ENCODE measurements at regions of chr10 and their contacts with region 1.

Region 1: DNA sequence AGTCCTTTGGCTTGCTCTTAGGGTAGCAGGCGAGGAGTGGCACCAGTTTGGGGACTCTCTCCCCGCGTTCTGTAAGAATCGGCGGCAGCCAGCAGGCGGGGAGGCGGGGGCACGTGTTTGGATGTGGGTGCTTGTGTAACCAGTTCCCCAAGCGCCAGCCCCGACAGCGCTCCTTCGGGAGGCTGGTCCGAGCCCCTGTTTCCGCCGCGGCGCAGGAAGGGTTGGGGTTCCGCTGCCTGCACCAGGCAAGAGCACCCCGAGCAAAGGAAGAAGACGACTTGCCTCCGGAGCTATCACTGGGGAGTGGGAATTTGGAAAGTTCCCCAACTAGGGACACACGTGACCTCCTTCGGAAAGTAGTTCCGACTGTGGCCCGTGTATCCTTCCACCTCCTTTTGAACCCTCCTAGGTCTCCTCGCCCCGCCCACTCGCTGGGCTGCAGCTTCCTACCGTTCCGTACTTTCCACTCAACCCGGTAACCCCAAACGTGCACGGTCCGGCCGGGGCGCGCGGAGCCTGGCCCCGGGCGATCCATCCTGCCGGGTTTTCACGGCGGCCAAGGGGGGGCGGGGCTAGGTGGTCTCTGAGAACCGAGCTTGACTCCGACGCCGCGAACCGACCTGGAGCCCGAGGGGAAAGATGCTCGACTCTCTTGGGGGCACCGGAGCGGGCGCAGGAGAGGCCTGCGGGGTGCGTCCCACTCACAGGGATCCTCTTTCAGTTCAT is 1.2 kb downstream of the KLLN start:
- DNase-seq: peak; percentile 86 to 98 (median 93)
- ATAC-seq: peak; percentile 66
- H3K4me3 ChIP-seq: peak overlapping the region; percentile 87 to 95
- H3K4me3 Mint-ChIP-seq: peak overlapping the region; percentile 99
- H3K27ac ChIP-seq: peak overlapping the region; percentile 69 to 85
- H3K27ac Mint-ChIP-seq: peak overlapping the region; percentile 95
- H3K4me1 ChIP-seq: peaks cover 18% of the 10 kb centered on the region
- H3K4me1 Mint-ChIP-seq: peaks cover 38% of the 10 kb centered on the region
- H3K27me3 ChIP-seq: no peaks in the 10 kb centered on the region
- H3K27me3 Mint-ChIP-seq: no peaks in the 10 kb centered on the region
- CTCF ChIP-seq: no peak

Region 2: GRCh38 chr10:86821388-86821999 is 1040.6 kb before region 1 on chr10:
- CTCF ChIA-PET with region 1: no interaction called
- POLR2A ChIA-PET with region 1: no interaction called
- intact Hi-C with region 1: no loop called
- DNase-seq: no peak
- ATAC-seq: no peak
- H3K4me3 ChIP-seq: no peak overlapping the region
- H3K4me3 Mint-ChIP-seq: no peak overlapping the region
- H3K27ac ChIP-seq: no peak overlapping the region
- H3K27ac Mint-ChIP-seq: no peak overlapping the region
- H3K4me1 ChIP-seq: no peaks in the 10 kb centered on the region
- H3K4me1 Mint-ChIP-seq: peaks cover 2% of the 10 kb centered on the region
- H3K27me3 ChIP-seq: no peaks in the 10 kb centered on the region
- H3K27me3 Mint-ChIP-seq: no peaks in the 10 kb centered on the region
- CTCF ChIP-seq: no peak

Region 3: GRCh38 chr10:87872828-87873227 is 10.7 kb after region 1 on chr10:
- CTCF ChIA-PET with region 1: interaction called, 8 read pairs
- POLR2A ChIA-PET with region 1: interaction called, 14 read pairs
- intact Hi-C with region 1: loop called in 1 of 2 experiments (anchors 1 kb)
- DNase-seq: no peak
- ATAC-seq: no peak
- H3K4me3 ChIP-seq: no peak overlapping the region
- H3K4me3 Mint-ChIP-seq: peak overlapping the region; percentile 29
- H3K27ac ChIP-seq: no peak overlapping the region
- H3K27ac Mint-ChIP-seq: peak overlapping the region; percentile 22
- H3K4me1 ChIP-seq: peaks cover 54% of the 10 kb centered on the region
- H3K4me1 Mint-ChIP-seq: peaks cover 77% of the 10 kb centered on the region
- H3K27me3 ChIP-seq: no peaks in the 10 kb centered on the region
- H3K27me3 Mint-ChIP-seq: no peaks in the 10 kb centered on the region
- CTCF ChIP-seq: no peak

Region 4: DNA sequence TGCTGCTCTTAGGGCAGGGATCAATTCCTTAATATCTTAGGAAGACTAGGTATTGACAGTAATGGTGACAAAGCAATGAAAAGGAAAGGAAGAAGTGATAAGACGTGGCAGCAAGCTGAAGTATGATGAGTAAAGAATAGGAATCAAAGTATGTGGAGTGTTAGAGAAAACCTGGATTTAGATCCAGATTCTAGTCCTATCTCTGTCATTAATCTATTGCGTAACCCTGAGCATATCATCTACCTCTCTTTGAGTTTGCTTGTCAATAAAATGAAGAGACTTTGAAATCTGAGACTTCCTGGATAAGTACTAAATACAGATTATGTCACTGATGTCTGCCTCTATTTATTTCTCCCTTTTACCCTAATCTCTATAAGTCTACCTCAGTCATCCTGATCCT is 90.5 kb after region 1 on chr10:
- CTCF ChIA-PET with region 1: no interaction called
- POLR2A ChIA-PET with region 1: no interaction called
- intact Hi-C with region 1: loop called in 1 of 2 experiments (anchors 5 kb)
- DNase-seq: no peak
- ATAC-seq: no peak
- H3K4me3 ChIP-seq: no peak overlapping the region
- H3K4me3 Mint-ChIP-seq: no peak overlapping the region
- H3K27ac ChIP-seq: no peak overlapping the region
- H3K27ac Mint-ChIP-seq: peak overlapping the region; percentile 13
- H3K4me1 ChIP-seq: no peaks in the 10 kb centered on the region
- H3K4me1 Mint-ChIP-seq: peaks cover 28% of the 10 kb centered on the region
- H3K27me3 ChIP-seq: no peaks in the 10 kb centered on the region
- H3K27me3 Mint-ChIP-seq: no peaks in the 10 kb centered on the region
- CTCF ChIP-seq: no peak

Region 5: DNA sequence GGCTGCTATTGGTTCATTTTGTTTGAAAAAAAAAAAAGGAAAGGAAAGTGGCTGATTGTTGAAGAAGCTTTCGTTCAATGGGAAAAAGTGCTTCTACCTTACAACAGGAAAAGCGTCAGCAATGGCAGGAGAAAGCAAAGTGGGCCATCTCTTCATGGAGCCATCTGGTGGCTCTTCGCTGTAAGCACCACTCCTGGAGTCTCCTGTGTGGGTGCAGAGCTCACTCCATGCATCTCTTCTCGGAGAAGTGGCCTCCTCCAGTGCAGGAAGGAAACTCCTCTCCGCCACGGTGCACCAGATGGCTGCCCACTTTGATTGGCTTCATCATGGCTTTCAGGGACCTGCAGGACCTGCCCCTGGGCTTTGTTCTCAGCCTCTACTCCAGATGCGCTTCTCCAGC is 252.3 kb after region 1 on chr10:
- CTCF ChIA-PET with region 1: interaction called, 19 read pairs
- POLR2A ChIA-PET with region 1: interaction called, 16 read pairs
- intact Hi-C with region 1: loop called (anchors 1 to 2 kb)
- DNase-seq: peak in 3 of 9 experiments; percentile 17 to 64 (median 52)
- ATAC-seq: peak; percentile 47
- H3K4me3 ChIP-seq: no peak overlapping the region
- H3K4me3 Mint-ChIP-seq: no peak overlapping the region
- H3K27ac ChIP-seq: no peak overlapping the region
- H3K27ac Mint-ChIP-seq: no peak overlapping the region
- H3K4me1 ChIP-seq: peaks cover 23% of the 10 kb centered on the region
- H3K4me1 Mint-ChIP-seq: peaks cover 16% of the 10 kb centered on the region
- H3K27me3 ChIP-seq: no peaks in the 10 kb centered on the region
- H3K27me3 Mint-ChIP-seq: no peaks in the 10 kb centered on the region
- CTCF ChIP-seq: no peak

Region 6: GRCh38 chr10:88386821-88387773 is 525.0 kb after region 1 on chr10:
- CTCF ChIA-PET with region 1: interaction called, 66 read pairs
- POLR2A ChIA-PET with region 1: interaction called, 57 read pairs
- intact Hi-C with region 1: loop called (anchors 1 kb)
- DNase-seq: peak in 2 of 9 experiments; percentile 28 to 59
- ATAC-seq: peak; percentile 57
- H3K4me3 ChIP-seq: no peak overlapping the region
- H3K4me3 Mint-ChIP-seq: no peak overlapping the region
- H3K27ac ChIP-seq: peak overlapping the region; percentile 80 to 86
- H3K27ac Mint-ChIP-seq: no peak overlapping the region
- H3K4me1 ChIP-seq: peaks cover 73% of the 10 kb centered on the region
- H3K4me1 Mint-ChIP-seq: peaks cover 34% of the 10 kb centered on the region
- H3K27me3 ChIP-seq: no peaks in the 10 kb centered on the region
- H3K27me3 Mint-ChIP-seq: no peaks in the 10 kb centered on the region
- CTCF ChIP-seq: no peak

Region 7: GRCh38 chr10:88582806-88583583 is 720.9 kb after region 1 on chr10 and contains the start of gene RNLS:
- CTCF ChIA-PET with region 1: no interaction called
- POLR2A ChIA-PET with region 1: interaction called, 18 read pairs
- intact Hi-C with region 1: no loop called
- DNase-seq: peak; percentile 21 to 84 (median 65)
- ATAC-seq: peak; percentile 83
- H3K4me3 ChIP-seq: peak within 1 kb of the TSS; percentile 83
- H3K4me3 Mint-ChIP-seq: peak within 1 kb of the TSS; percentile 91
- H3K27ac ChIP-seq: peak within 1 kb of the TSS; percentile 72 to 83
- H3K27ac Mint-ChIP-seq: peak within 1 kb of the TSS; percentile 92
- H3K4me1 ChIP-seq: peaks cover 7% of the 10 kb centered on the region
- H3K4me1 Mint-ChIP-seq: peaks cover 11% of the 10 kb centered on the region
- H3K27me3 ChIP-seq: no peaks in the 10 kb centered on the region
- H3K27me3 Mint-ChIP-seq: peaks cover 3% of the 10 kb centered on the region
- CTCF ChIP-seq: peak; percentile 61
- total RNA-seq, gene RNLS: 1.6 to 1.7 TPM

Region 8: DNA sequence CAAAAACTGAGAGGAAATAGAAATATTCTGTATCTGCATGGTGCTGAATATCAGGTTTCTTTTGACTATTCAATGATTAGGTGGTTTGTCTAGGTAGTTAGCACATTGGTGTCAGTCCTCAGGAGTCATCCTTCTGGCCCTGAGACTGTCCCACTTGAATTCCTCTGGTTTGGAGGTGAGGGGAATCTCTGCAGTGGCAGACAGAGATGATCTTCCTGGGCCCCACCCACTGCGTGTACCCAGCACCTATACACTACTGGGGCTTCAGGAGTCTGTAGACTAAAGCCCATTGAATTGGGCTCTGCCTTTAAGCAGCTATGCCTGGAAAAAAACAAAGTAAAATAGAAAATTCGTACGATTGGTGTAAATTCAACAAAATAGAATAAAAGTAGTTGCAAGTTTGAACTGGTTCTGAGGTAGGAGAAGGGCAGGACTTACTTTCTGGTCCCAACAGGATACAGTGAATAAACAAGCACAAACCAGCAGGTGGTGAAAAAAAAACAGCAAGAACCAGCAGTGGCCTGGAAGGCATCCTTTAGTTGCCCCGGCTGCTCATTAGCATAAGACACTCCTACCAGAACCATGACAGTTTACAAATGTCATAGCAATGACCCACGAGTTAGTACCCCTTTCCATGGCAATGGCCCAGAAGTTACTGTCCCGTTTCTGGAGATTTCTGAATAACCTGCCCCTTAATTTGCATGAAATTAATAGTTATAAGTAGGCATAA is 942.1 kb after region 1 on chr10:
- CTCF ChIA-PET with region 1: no interaction called
- POLR2A ChIA-PET with region 1: no interaction called
- intact Hi-C with region 1: no loop called
- DNase-seq: no peak
- ATAC-seq: no peak
- H3K4me3 ChIP-seq: no peak overlapping the region
- H3K4me3 Mint-ChIP-seq: no peak overlapping the region
- H3K27ac ChIP-seq: no peak overlapping the region
- H3K27ac Mint-ChIP-seq: no peak overlapping the region
- H3K4me1 ChIP-seq: no peaks in the 10 kb centered on the region
- H3K4me1 Mint-ChIP-seq: no peaks in the 10 kb centered on the region
- H3K27me3 ChIP-seq: no peaks in the 10 kb centered on the region
- H3K27me3 Mint-ChIP-seq: no peaks in the 10 kb centered on the region
- CTCF ChIP-seq: no peak

Measured in CD8-positive, alpha-beta T cell (primary cell).